ENCODE measurements at regions of chr11 and their contacts with region 1.

Region 1: DNA sequence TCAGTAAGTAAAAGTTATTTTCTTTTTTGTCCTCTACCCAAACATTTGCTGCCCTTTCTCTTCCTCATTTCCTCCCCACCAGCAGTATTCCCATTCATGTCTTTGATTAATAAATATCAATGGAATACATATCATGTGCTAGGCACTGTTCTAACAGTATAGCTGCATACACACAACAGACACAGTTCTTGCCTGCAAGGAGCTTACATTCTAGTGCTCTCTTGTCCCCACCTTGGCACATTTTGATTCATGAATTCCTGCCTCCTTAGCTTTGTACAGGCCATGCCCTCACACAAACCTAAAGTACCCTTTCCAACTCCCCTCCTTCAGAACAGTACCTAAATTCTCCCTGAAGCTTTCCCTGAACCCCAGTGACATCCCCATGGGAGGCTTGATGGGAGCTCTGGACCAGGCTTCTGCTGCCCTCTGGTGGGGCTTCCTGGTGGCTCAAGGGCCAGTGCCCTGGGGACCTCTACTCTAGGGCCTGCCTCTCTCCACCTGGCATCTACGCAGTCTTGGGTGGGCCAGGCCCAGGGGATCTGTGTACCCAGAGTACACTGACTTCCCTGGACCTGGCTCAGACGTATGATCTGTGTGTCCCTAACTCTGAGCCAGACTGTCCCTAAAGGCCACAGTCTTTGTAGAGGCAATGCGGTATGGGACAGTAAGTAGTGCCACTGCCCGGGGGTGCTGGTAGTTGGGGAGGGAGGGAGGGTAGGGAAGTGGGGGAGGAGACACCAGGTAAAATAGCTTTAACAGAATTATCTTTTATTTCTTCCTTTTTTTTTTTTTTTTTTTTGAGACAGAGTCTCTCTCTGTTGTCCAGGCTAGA is 14.1 kb downstream of the RPS13 start:
- DNase-seq: peak; percentile 70
- H3K4me3 Mint-ChIP-seq: no peak overlapping the region
- H3K27ac Mint-ChIP-seq: no peak overlapping the region
- H3K4me1 Mint-ChIP-seq: no peaks in the 10 kb centered on the region
- H3K27me3 Mint-ChIP-seq: peaks cover 3% of the 10 kb centered on the region

Region 2: DNA sequence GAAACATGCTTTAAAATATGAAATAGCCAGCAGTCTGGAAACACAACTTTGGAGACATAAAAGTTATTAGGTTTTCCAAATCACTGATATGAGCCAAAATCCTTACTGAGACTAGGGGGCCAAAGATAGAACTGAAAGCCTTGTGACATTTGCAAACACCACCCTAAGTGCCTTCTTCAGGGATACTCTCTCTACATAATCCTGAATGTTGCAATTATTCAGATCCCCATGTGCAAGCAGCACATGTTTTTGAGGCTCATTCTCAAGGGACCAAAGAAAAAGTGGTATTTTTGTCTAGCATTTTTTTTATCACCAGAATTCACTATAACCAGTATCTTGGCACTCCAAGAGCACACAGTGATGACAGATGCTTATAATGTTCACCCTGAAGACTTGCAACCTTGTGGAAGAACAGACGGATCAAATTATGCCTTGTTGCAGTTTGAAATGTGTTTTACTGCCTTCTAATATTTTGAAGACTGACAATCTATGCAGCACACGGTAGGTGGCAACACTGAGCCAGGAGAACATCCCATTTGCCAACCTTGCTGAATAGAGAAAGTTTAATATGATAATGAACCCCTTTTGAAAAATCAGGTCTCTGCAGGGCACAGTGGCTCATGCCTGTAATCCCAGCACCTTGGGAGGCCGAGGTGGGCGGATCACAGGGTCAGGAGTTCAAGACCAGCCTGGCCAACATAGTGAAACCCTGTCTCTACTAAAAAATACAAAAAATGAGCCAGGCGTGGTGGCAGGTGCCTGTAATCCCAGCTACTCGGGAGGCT is 127.7 kb before region 1 on chr11:
- CTCF ChIA-PET with region 1: interaction called, 14 read pairs
- DNase-seq: peak; percentile 43
- H3K4me3 Mint-ChIP-seq: no peak overlapping the region
- H3K27ac Mint-ChIP-seq: no peak overlapping the region
- H3K4me1 Mint-ChIP-seq: no peaks in the 10 kb centered on the region
- H3K27me3 Mint-ChIP-seq: peaks cover 24% of the 10 kb centered on the region

Region 3: DNA sequence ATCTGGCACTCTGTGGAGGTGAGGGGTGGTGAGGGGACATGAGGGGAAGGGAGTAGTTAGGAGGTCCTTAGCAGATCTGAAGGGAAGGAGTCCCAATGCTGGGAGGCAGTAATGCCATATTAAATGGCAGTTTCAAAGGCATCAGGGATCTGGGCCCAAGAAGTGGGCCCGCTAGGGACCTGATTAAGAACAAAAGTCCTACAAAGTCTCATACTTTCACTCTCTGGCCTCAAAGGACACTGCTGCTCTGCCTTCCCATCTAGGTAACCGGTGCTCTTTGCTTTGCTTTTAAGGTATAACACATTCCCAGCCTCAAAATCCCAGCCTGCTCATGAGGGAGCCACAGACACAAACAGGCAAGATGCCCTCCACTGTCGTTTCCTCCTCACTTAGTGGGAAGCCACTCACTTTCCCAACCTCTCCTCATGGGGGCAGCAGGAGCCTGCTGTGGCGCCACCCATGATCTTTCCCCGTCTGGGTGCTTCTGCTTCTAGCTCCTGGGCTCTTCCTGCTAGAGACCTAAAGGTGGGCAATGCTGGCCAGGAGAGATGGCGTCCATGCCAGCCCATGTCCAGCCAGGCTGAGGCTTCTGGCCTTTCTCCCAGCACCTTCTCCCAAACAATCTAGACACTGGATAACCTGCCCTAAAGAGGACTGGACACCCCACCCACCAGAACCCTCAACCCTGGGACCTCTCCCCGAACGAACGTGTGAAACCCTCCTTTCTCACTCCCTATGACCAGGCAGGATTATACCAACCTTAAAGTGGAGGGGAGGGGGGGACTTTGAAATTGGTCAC is 117.5 kb before region 1 on chr11:
- CTCF ChIA-PET with region 1: interaction called, 31 read pairs
- DNase-seq: peak; percentile 61
- H3K4me3 Mint-ChIP-seq: no peak overlapping the region
- H3K27ac Mint-ChIP-seq: no peak overlapping the region
- H3K4me1 Mint-ChIP-seq: no peaks in the 10 kb centered on the region
- H3K27me3 Mint-ChIP-seq: peaks cover 4% of the 10 kb centered on the region

Region 4: GRCh38 chr11:17298302-17298701 is 234.9 kb after region 1 on chr11:
- CTCF ChIA-PET with region 1: no interaction called
- DNase-seq: no peak
- H3K4me3 Mint-ChIP-seq: no peak overlapping the region
- H3K27ac Mint-ChIP-seq: no peak overlapping the region
- H3K4me1 Mint-ChIP-seq: peaks cover 21% of the 10 kb centered on the region
- H3K27me3 Mint-ChIP-seq: no peaks in the 10 kb centered on the region

Measured in activated naive CD4-positive, alpha-beta T cell treated with anti-CD3 and anti-CD28 coated beads, Interleukin-2, amount 10 ng/mL, durations not matched to agents 7 days and 5 days (primary cell).